Heart left ventricle (tissue), 16 donors: ENCODE measurements at regions of chr21 and their contacts with region 1.

Region 1: DNA sequence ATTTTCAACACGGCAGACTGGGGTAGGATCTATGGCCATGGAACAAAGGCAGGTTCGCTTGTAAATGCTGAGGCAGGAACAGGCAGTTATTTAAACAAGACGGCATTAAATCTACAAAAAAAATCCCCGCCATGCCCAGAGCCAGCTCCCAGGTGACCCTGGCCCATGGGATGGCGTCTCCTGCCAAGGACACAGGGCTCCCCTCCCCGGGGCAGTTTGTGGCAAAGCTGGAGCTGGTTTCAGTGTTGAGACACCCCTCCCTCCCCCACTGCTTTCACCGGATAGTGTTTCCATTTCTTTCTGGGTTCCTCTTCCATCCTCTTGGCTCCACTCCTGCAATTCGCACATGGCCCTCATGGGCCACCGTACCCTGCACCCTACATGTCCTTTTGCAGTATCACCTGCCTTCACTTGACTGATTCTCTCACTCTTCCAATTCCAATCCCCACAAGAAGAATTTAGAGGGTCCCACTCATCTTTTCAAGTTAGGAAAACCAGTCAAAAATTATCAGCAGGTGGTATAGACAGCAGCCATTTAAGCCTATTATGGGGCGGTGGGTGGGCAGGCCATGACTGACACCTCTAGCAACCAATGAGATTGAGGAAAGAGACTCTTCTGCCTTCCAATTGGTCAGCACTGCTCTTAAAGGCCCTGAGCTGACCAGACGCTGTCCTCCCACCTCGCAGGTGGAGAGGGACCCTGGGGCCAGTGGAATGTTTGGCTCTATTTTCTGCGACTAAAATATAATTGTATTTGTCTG is 52.0 kb downstream of the OLIG1 start:
- DNase-seq: no peak
- ATAC-seq: no peak
- H3K4me3 ChIP-seq: no peak overlapping the region
- H3K27ac ChIP-seq: no peak overlapping the region
- H3K4me1 ChIP-seq: peaks cover 0 to 1% (median 0%) of the 10 kb centered on the region in 12 donors
- H3K27me3 ChIP-seq: peaks cover 0 to 51% (median 10%) of the 10 kb centered on the region in 9 donors
- CTCF ChIP-seq: no peak
- POLR2A ChIP-seq: no peak

Region 2: DNA sequence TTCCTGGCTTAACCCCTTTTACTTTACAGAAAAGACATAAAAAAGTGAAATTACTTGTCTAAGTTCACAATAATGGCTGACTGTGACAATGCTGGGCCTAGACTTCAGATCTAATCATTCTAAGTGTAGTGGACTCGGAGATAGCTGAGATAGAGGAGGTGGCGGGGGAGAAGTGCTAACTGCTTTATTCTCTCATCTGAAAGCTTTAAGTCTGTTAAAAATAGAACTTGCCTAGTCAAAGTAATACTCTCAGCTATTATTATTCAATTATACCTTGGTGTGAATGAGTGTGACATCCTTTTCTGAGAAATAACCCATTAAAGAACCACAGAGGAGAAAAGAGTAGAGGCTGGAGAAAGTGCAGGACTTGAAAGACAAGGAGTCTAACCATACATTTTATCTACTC is 192.3 kb before region 1 on chr21:
- intact Hi-C with region 1: no loop called
- DNase-seq: no peak
- ATAC-seq: no peak
- H3K4me3 ChIP-seq: no peak overlapping the region
- H3K27ac ChIP-seq: no peak overlapping the region
- H3K4me1 ChIP-seq: no peaks in the 10 kb centered on the region
- H3K27me3 ChIP-seq: no peaks in the 10 kb centered on the region
- CTCF ChIP-seq: no peak
- POLR2A ChIP-seq: no peak

Region 3: DNA sequence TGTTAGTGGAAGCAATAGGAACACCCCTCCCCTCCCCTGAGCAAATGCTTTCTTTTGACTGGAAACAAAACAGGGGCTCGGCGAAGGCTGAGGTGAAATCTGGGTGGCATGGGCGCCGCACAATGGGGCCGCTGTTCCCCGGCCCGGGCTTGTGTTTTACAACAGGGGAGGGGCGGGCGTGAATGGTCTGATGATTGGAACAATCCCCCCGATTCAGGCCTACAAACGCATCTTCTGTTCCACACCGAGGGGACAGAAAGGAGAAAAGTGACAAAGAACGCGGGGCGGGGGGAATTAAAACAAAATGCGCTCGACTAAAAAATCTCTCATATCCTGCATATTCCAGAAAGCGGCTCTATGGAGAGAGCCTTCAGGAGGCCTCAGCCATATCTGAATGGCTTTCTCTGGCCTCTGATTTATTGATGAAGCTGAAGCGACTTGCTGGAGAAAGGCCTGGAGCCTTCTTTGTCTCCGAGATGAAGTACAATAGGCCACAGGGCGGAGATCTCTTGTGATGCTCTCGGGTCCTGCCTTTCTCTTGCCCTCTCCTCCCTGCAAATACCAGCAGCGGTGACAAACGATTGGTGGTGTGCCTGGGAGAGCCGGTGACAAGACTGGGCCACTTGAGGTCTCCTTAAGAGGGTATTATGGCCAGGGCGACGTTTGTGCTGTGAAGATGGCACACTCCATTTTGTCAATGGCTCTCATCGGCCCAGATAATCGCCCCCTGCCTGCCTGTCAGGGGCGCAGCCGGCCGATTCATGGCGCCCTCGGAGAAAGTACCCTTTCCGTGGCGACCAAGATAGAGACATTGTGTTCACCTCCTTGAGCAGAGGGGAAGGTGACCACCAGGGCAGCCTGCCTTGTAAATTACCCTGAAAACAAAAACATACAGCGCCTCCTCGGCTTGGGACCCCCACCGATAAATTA is 143.3 kb before region 1 on chr21:
- intact Hi-C with region 1: no loop called
- DNase-seq: no peak
- ATAC-seq: no peak
- H3K4me3 ChIP-seq: no peak overlapping the region
- H3K27ac ChIP-seq: no peak overlapping the region
- H3K4me1 ChIP-seq: no peaks in the 10 kb centered on the region
- H3K27me3 ChIP-seq: peaks cover 0 to 56% (median 0%) of the 10 kb centered on the region in 9 donors
- CTCF ChIP-seq: no peak
- POLR2A ChIP-seq: no peak

Region 4: DNA sequence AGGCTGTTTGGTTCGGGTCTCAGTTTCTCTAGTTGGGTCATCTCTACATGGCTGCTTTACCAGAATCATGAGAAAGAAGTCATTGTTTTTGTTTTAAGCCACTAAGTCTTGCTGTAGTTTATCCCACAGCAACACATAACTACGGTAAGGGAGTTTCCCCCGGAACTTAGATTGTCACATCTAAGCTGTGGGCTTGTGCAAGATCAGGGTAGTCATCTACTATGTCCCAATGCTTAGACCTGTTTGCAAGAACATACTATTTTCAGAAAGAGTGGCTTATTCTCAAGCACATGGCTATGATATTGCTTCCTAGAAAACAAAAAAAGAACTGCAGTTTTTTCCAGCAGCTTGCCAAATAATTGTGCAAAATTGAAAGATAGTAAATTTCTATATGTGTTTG is 114.1 kb before region 1 on chr21:
- intact Hi-C with region 1: loop called in 1 of 10 experiments (anchors 5 kb)
- DNase-seq: no peak
- ATAC-seq: peak in 1 of 4 donors; percentile 81
- H3K4me3 ChIP-seq: no peak overlapping the region
- H3K27ac ChIP-seq: no peak overlapping the region
- H3K4me1 ChIP-seq: peaks cover 0 to 25% (median 0%) of the 10 kb centered on the region in 12 donors
- H3K27me3 ChIP-seq: peaks cover 0 to 35% (median 0%) of the 10 kb centered on the region in 9 donors
- CTCF ChIP-seq: no peak
- POLR2A ChIP-seq: no peak